ENCODE measurements at regions of chr18 and their contacts with region 1.

Region 1: DNA sequence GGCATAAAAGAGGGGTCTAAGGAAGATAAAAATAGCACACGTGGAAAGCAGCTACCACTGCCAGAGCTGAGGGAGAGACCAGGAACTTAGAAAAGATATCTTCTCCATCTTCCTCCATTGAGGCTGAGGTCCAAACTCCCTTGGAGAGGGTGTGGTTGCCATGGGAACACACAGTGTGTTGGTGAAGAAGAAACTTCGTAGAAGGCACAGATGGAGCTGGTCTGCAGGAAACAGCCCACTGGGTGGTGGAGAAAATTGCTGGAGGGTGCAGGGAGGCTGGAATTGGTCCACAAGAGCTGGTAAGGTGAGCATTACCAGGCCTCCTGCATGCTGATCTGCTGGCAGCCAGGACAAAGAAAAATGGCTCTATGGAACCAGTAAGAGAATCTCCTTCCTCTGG is 191.0 kb downstream of the HRH4 start:
- DNase-seq: no peak
- H3K4me3 ChIP-seq: no peak overlapping the region
- H3K27ac ChIP-seq: no peak overlapping the region
- H3K4me1 ChIP-seq: no peaks in the 10 kb centered on the region
- H3K27me3 ChIP-seq: no peaks in the 10 kb centered on the region
- CTCF ChIP-seq: no peak

Region 2: GRCh38 chr18:24584813-24585212 is 66.6 kb before region 1 on chr18:
- CTCF ChIA-PET with region 1: no interaction called
- dilution Hi-C with region 1: loop called (anchors 5 kb)
- in situ Hi-C with region 1: no loop called
- intact Hi-C with region 1: no loop called
- DNase-seq: no peak
- H3K4me3 ChIP-seq: no peak overlapping the region
- H3K27ac ChIP-seq: no peak overlapping the region
- H3K4me1 ChIP-seq: peaks cover 13% of the 10 kb centered on the region
- H3K27me3 ChIP-seq: no peaks in the 10 kb centered on the region
- CTCF ChIP-seq: no peak

Region 3: DNA sequence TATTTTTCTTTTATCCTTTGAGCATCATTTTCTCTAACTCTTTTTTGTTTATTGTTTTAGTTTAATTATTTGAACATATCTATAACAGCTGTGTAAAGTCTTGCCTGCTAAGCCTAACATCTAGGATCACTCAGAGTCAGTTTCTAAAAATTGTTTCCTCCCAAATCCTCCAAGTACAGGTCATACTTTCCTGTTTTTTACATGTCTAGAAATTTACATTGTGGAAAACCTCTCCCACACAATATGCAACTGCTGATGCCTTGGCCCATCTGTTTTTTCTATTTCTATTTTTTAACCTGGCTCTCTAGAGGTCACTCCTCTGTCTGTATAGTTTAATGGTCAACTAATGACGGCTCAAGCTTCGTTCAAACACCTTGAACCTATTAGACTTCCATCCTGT is 70.0 kb after region 1 on chr18:
- CTCF ChIA-PET with region 1: no interaction called
- dilution Hi-C with region 1: no loop called
- in situ Hi-C with region 1: no loop called
- intact Hi-C with region 1: no loop called
- DNase-seq: no peak
- H3K4me3 ChIP-seq: no peak overlapping the region
- H3K27ac ChIP-seq: no peak overlapping the region
- H3K4me1 ChIP-seq: no peaks in the 10 kb centered on the region
- H3K27me3 ChIP-seq: peaks cover 7% of the 10 kb centered on the region
- CTCF ChIP-seq: no peak